Gastrocnemius medialis (tissue), 4 donors: ENCODE measurements at regions of chr1 and their contacts with region 1.

Region 1: GRCh38 chr1:171741872-171742576 is at the start of gene VAMP4:
- DNase-seq: peak; percentile 82 to 84
- ATAC-seq: peak; percentile 87
- H3K4me3 ChIP-seq: peak within 1 kb of the TSS; percentile 84 to 97 (median 94)
- H3K27ac ChIP-seq: peak within 1 kb of the TSS; percentile 95 to 99 (median 98)
- H3K4me1 ChIP-seq: peaks cover 24 to 30% of the 10 kb centered on the region in 2 donors
- H3K27me3 ChIP-seq: no peaks in the 10 kb centered on the region
- CTCF ChIP-seq: peak in 2 of 5 experiments; percentile 1 to 18
- POLR2A ChIP-seq: peak; percentile 86 to 87
- total RNA-seq, gene VAMP4: 4.6 to 11.1 (median 5.0) TPM

Region 2: DNA sequence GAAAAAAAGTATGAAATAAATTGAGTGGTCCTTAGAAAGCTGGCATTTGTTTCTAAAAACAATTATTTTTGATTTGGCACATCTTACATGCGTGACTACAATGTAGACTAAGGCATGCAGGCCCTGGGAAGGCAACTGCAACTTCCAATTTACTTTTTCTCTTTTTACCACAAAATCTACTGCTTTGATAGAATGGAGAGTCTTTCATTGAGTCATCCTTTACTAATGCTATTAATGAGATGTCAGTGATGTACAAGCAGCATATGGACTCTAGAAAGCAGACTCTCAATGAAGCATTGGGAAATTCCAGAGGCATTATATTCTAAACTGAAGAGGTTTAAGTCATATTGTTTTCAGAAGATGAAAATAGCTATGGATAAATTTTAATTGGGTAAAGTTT is 1107.7 kb before region 1 on chr1:
- in situ Hi-C with region 1: no loop called
- intact Hi-C with region 1: no loop called
- DNase-seq: no peak
- ATAC-seq: no peak
- H3K4me3 ChIP-seq: no peak overlapping the region
- H3K27ac ChIP-seq: no peak overlapping the region
- H3K4me1 ChIP-seq: no peaks in the 10 kb centered on the region
- H3K27me3 ChIP-seq: no peaks in the 10 kb centered on the region
- CTCF ChIP-seq: no peak
- POLR2A ChIP-seq: no peak

Region 3: GRCh38 chr1:171313835-171314320 is 428.1 kb before region 1 on chr1 and contains the start of gene FMO4:
- in situ Hi-C with region 1: no loop called
- intact Hi-C with region 1: loop called (anchors 10 kb)
- DNase-seq: peak; percentile 82 to 87
- ATAC-seq: peak; percentile 100
- H3K4me3 ChIP-seq: peak within 1 kb of the TSS; percentile 14 to 50 (median 30)
- H3K27ac ChIP-seq: peak within 1 kb of the TSS; percentile 61 to 72 (median 66)
- H3K4me1 ChIP-seq: peaks cover 0 to 12% of the 10 kb centered on the region in 2 donors
- H3K27me3 ChIP-seq: no peaks in the 10 kb centered on the region
- CTCF ChIP-seq: peak; percentile 46 to 69 (median 62)
- POLR2A ChIP-seq: peak in 1 of 2 donors; percentile 34
- total RNA-seq, gene FMO4: 0.36 to 2.9 (median 0.94) TPM

Region 4: DNA sequence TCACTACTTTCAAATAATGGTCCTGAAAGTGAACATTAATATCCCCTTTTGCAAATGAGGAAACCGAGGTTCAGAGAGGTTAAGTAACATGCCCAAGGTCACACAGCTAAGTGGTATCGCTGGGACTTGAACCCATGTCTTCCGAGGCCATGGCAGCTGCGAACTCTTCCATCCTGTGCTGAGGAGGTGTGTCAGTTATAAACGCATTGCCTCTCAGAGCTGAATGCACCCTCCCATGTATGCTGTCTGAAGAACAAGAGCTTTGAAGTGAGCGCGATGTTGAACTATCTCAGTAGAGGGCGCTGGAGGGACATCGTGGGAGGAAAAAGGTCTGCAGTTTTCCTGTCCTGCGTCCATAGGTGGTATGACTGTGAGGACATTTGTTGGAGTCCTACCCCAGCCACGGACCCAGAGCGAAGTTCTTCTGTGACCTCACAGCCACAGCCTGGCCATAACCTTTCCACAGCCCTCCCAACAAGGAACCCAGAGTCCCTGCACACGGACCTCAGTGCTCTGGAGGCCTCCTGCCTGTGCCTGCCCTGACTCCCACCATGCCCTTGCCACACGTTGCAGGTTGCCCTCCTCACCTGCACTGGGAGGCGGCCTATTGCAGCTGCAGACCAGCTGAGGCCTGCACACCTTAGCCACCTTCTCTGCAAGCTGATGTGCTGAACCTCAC is 97.1 kb before region 1 on chr1:
- in situ Hi-C with region 1: loop called in 1 of 4 experiments (anchors 10 kb)
- intact Hi-C with region 1: loop called (anchors 1 kb)
- DNase-seq: peak; percentile 42 to 83
- ATAC-seq: peak; percentile 84 to 89
- H3K4me3 ChIP-seq: peak overlapping the region; percentile 1 to 22 (median 16)
- H3K27ac ChIP-seq: peak overlapping the region; percentile 62 to 79 (median 76)
- H3K4me1 ChIP-seq: peaks cover 13 to 15% of the 10 kb centered on the region in 2 donors
- H3K27me3 ChIP-seq: no peaks in the 10 kb centered on the region
- CTCF ChIP-seq: peak; percentile 51 to 87 (median 77)
- POLR2A ChIP-seq: no peak

Region 5: GRCh38 chr1:171715813-171716251 is 26.2 kb before region 1 on chr1:
- in situ Hi-C with region 1: no loop called
- intact Hi-C with region 1: loop called (anchors 2 kb)
- DNase-seq: no peak
- ATAC-seq: no peak
- H3K4me3 ChIP-seq: no peak overlapping the region
- H3K27ac ChIP-seq: peak overlapping the region in 3 of 4 donors; percentile 64 to 69 (median 65)
- H3K4me1 ChIP-seq: peaks cover 19 to 25% of the 10 kb centered on the region in 2 donors
- H3K27me3 ChIP-seq: no peaks in the 10 kb centered on the region
- CTCF ChIP-seq: peak in 4 of 5 experiments; percentile 17 to 43 (median 35)
- POLR2A ChIP-seq: no peak

Region 6: DNA sequence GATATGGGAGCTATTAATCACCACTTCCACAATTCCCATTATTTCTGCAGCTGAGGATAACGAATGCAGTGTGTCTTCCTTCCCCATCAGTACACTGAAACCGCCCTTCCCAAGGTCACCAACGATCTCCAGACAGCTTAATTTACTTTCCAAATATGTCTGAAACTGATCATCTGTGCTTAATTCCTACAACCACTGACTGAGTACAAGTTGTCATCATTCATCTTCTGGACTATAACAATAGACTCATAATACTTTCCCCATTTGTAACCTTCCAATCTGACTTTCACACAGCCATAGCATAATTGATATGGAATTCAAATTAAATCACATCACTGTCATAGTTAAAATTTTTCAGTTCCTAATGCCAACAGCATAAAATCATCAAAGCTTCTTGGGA is 116.7 kb after region 1 on chr1:
- in situ Hi-C with region 1: no loop called
- intact Hi-C with region 1: no loop called
- DNase-seq: no peak
- ATAC-seq: no peak
- H3K4me3 ChIP-seq: no peak overlapping the region
- H3K27ac ChIP-seq: no peak overlapping the region
- H3K4me1 ChIP-seq: no peaks in the 10 kb centered on the region
- H3K27me3 ChIP-seq: no peaks in the 10 kb centered on the region
- CTCF ChIP-seq: no peak
- POLR2A ChIP-seq: no peak

Region 7: GRCh38 chr1:172515927-172516326 is 773.9 kb after region 1 on chr1:
- in situ Hi-C with region 1: no loop called
- intact Hi-C with region 1: no loop called
- DNase-seq: no peak
- ATAC-seq: no peak
- H3K4me3 ChIP-seq: no peak overlapping the region
- H3K27ac ChIP-seq: no peak overlapping the region
- H3K4me1 ChIP-seq: no peaks in the 10 kb centered on the region
- H3K27me3 ChIP-seq: no peaks in the 10 kb centered on the region
- CTCF ChIP-seq: no peak
- POLR2A ChIP-seq: no peak

Region 8: GRCh38 chr1:172532700-172533509 is 790.9 kb after region 1 on chr1 and contains the start of gene SUCO:
- in situ Hi-C with region 1: no loop called
- intact Hi-C with region 1: loop called (anchors 2 kb)
- DNase-seq: peak; percentile 99 to 100
- ATAC-seq: peak; percentile 90 to 93
- H3K4me3 ChIP-seq: peak within 1 kb of the TSS; percentile 69 to 99 (median 96)
- H3K27ac ChIP-seq: peak within 1 kb of the TSS; percentile 94 to 100 (median 98)
- H3K4me1 ChIP-seq: peaks cover 19 to 28% of the 10 kb centered on the region in 2 donors
- H3K27me3 ChIP-seq: no peaks in the 10 kb centered on the region
- CTCF ChIP-seq: no peak
- POLR2A ChIP-seq: peak; percentile 92 to 93
- total RNA-seq, gene SUCO: 5.8 to 11.3 (median 6.4) TPM